Right ventricle myocardium inferior (tissue), 1 donor: ENCODE measurements at regions of chr12 and their contacts with region 1.

Region 1: DNA sequence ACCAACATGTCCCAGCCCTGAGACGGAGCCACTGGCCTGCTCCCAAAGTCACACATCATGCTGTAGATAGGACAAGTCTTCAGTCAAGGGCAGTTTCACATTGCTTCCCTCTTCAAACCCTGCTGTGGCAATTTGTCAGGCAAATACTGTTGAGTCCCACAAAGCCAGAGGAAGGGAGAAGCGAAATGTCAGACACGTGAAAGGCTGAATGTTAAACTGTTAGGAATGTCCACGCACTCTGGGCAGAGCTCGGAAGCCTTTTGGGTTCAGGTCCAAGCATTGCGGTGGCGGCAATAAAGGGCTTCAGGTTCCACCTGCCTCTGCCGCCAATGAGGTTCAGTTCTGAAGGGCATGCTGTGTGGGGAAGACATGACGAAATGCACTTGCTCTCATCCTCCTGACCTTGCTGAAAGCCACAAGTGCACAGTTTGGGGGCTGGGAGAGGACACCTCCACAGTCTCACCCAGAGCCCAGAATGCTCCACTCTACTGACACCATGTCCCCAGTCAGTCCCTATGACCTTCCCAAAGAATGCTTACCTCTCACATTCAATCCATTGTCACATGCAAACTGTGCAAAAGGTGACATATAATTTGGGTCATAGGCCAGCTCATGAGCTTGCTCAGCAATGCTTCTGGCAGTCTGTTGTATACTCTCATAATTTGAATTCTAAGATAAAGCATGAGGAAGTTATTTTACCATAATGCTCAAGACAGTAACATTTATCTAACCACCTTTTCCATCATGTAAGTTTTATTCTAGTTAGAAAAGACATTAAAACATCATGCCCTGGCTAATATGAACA is 35.7 kb downstream of the RAD9B start:
- DNase-seq: peak; percentile 79
- ATAC-seq: peak; percentile 91

Region 2: GRCh38 chr12:110583137-110584059 is 45.6 kb after region 1 on chr12 and contains the start of gene PPTC7:
- intact Hi-C with region 1: loop called (anchors 2 kb)
- DNase-seq: peak; percentile 99
- ATAC-seq: peak; percentile 97
- total RNA-seq, gene PPTC7: 99.2 TPM